ENCODE measurements at regions of chr2 and their contacts with region 1.

Region 1: DNA sequence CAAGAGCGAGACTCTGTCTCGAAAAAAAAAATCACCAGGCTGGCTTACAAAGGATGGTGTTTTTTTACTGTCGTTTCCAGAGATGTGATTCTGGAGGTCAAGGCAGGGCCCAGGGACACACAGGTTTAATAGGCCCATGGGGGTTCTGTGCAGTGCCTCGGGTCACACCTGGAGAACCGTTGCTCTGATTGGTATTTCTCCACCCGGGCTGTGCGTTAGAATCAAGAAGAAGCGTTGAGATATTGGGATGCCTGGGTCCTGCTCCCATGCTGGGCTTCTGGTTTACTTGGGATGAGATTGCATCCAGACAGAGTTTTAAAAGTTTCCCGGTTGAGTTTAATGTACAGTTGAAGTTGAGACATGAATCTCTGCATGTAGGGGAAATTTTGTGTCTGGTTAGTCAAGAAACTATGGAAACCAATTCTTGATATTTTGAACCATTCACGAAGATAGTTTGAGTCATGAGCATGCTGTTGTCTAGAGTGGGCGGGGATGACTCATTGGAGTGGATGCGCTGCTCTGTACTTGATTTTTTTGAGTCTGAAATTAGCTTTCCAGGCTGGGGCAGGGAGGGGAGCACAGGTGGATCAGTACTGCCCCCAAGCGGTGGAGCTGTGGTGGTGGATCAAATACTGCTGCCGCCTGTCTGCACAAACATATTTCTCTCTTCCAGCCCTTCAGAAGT is 50.1 kb downstream of the GREB1 start:
- DNase-seq: peak; percentile 99
- H3K4me3 ChIP-seq: no peak overlapping the region
- H3K27ac ChIP-seq: peak overlapping the region; percentile 66
- H3K4me1 ChIP-seq: peaks cover 7% of the 10 kb centered on the region; the same call in 1 of the 2 replicates
- H3K27me3 ChIP-seq: no peaks in the 10 kb centered on the region

Region 2: GRCh38 chr2:10832203-10832936 is 751.6 kb before region 1 on chr2:
- in situ Hi-C with region 1: loop called (anchors 10 kb)
- DNase-seq: peak; percentile 88
- H3K4me3 ChIP-seq: no peak overlapping the region
- H3K27ac ChIP-seq: no peak overlapping the region
- H3K4me1 ChIP-seq: no peaks in the 10 kb centered on the region
- H3K27me3 ChIP-seq: peaks cover 46% of the 10 kb centered on the region

Region 3: DNA sequence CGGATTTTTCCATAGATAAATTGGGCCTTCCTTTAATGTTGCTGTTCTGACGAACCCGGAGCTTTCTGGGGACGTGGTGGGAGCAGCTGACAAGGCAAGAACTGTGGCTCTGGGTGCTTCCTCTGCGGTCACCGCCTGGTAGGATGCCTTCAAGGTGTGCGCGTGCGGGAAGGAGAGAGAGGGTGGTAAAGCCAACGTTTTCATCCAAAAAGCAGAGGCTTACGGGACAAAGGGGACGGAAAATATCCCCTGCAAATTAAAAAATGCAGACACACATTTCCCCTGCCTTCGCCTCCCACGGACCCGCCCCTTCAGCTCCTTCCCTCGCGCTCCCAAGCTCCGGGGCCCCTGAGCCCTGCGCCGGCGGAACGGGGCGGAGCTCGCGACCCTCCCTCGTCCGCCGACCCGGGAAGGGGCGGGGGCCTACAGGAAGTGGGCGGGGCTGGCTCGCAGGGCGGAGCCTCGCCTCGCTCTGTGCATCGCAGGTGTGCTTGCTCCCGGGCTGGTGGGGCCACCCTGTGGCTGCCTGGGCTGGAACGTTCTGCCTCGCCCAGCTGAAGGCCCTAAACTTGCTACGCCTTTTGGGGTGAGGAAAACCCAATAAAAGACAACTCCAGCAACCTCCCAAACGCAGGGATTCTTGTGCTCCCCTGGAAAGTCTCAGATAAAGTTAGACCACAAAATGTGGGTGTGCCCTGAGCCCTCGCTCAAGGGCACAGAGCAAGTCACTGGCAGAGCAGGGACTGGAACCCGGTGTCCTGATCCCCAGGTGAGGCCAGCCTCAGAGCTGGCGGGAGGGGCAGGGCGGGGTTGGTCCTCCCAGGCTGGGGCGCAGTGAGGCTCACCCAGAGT is 454.2 kb before region 1 on chr2:
- in situ Hi-C with region 1: loop called (anchors 10 kb)
- DNase-seq: no peak
- H3K4me3 ChIP-seq: peak overlapping the region; percentile 50; the same call in 1 of the 2 replicates
- H3K27ac ChIP-seq: no peak overlapping the region
- H3K4me1 ChIP-seq: peaks cover 6% of the 10 kb centered on the region; the same call in 1 of the 2 replicates
- H3K27me3 ChIP-seq: no peaks in the 10 kb centered on the region

Region 4: DNA sequence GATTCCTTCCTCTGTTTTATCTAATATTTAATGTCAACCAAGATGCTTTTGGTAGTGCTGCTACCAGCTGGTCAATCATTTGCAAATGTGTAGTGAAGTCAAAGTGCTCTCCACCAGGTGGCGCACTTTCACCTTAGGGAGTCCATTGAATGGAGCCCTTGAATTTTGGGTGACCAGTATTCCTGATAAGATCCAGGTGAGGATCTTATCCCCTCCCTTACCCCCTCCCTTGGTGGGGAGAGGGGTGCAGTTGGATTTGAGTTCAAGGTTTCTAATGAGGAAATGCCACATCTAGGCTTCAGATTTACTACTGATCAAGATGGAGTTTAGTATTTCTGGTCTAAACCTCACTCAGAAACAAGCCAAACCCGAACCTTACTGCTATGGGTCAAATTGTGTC is 106.0 kb before region 1 on chr2:
- in situ Hi-C with region 1: loop called (anchors 5 kb)
- DNase-seq: peak; percentile 89
- H3K4me3 ChIP-seq: no peak overlapping the region
- H3K27ac ChIP-seq: no peak overlapping the region
- H3K4me1 ChIP-seq: no peaks in the 10 kb centered on the region
- H3K27me3 ChIP-seq: peaks cover 15% of the 10 kb centered on the region

Region 5: DNA sequence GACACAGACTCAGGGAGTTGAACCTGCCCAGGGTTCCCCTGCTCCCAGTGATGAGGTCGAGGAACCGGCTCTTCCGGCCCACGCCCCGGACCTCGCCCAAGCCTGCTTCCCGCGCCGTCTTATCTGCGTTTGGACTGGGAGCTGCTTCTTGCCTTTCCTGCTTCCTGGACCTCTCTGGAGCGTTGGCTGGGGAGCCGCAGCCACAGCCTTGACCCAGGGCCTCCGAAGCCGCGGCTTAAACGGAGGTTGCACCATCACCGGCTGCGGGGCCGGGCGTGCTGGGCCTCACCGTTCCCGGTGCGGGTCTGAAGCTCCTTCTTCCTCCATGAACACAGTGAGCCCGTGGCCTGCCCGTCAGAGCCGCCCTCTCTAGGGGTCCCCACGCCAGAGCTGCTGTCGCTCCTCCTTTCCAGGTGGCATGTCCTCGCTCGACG is 72.7 kb after region 1 on chr2:
- in situ Hi-C with region 1: no loop called
- DNase-seq: no peak
- H3K4me3 ChIP-seq: no peak overlapping the region
- H3K27ac ChIP-seq: no peak overlapping the region
- H3K4me1 ChIP-seq: no peaks in the 10 kb centered on the region
- H3K27me3 ChIP-seq: peaks cover 33% of the 10 kb centered on the region

Region 6: GRCh38 chr2:12493031-12493513 is 909.1 kb after region 1 on chr2:
- in situ Hi-C with region 1: no loop called
- DNase-seq: peak; percentile 86
- H3K4me3 ChIP-seq: no peak overlapping the region
- H3K27ac ChIP-seq: peak overlapping the region; percentile 41
- H3K4me1 ChIP-seq: 0 out of 2 replicates have a peak, but pooled peaks cover 9% of the 10 kb centered on the region
- H3K27me3 ChIP-seq: no peaks in the 10 kb centered on the region

Measured in GM23248 (cell line).